AG04449 (cell line): ENCODE measurements at regions of chr3 and their contacts with region 1.

Region 1: DNA sequence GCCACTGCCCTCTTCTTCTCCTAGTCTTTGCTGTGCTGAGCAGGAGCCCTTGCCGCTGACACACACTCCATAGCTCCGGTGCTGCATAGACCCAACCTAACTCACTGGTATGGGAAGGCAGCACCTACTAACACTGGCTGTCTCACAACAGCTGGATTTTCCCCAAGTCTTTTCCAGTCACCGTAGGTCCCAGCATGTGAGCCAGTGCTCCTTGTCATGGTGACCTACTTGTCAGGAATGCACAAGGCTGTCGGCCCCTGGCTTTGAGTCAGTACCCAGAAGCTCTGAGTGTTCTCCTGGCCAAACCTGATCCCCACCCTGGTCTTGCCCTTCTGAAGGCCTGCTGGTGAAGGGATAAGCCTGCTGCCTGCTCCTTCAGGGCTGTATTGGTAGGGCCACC is 25.7 kb downstream of the AMOTL2 start:
- DNase-seq: no peak
- H3K4me3 ChIP-seq: no peak overlapping the region
- CTCF ChIP-seq: no peak

Region 2: DNA sequence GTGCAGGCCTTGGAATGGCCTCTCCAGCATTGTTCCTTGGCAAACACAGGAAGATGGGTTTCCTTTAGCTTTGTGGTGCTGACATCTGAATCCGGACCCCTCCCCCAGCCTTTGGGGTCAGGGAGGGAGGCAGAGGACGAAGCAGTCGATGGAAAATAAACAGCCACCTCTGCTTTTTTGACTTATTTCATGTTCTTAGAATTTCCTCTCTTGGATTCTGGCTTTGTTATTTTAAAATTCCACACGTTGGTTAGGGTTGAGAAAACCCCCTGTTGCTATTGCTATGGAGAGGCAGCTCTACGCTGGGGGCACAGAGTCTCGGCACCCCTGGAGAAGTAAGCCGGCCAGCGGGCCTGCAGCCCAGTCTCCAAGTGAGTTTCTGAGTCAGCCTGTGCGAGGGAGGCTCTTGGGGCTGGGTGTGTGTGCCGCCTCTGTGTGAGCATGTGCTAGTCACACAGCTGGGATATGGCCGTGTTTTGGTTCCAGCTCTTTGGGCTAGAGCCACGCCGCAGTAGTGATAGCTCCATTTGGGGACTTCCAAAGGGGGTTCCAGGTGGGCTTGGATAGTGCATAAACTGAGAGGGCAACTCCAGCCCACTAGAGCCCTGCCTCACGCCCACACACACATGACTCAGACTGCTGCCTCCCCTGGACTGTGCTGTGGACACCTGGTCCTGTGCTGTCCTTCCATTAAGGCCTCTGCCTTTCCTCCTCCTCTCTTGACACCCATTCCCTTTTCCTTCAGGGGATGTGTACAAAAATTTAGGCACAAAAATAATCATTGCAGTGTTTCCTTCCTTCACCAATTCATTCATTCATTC is 33.0 kb before region 1 on chr3:
- CTCF ChIA-PET with region 1: no interaction called
- POLR2A ChIA-PET with region 1: interaction called, 12 read pairs
- DNase-seq: no peak
- H3K4me3 ChIP-seq: no peak overlapping the region
- CTCF ChIP-seq: no peak

Region 3: DNA sequence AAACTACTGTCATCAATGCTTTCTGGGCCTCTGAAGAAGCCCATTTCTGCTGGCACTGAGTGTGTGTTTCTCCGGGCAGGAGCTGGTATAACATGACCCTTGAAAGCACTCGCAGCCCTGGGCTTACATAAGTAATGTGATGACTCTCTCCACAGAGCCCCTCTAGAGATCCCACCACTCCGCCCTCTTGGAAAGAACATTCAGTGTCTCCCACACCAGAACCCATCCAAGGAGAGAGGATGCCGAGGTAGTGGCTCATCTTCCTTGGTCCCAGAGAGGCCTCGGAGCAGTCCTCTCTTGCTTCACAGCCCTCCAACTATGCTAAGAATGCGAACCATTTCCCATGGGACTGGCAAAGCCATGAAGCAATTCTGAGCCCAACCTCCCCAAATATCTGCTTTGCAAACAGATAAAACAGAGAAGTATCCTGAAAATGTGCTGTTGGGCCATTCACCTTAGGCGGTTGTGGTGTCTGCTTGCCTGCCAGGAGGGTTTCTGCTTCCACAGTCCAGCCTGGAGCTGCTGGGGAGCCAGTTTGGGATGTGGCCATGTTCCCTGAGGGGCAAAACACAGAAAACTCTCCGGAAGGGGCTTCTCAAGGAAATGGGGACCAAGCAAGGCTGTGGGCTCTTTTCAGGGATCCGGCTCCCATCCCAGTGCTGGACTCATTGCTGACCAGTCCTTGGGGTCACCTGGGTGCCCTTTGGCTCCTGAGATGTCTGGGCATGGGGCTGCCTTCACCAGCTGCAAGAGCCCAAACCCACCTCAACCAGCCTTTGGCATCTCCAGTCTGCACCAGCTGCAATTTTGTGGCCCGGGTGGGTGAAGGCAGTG is 21.5 kb before region 1 on chr3:
- CTCF ChIA-PET with region 1: interaction called, 5 read pairs
- POLR2A ChIA-PET with region 1: interaction called, 12 read pairs
- DNase-seq: peak; percentile 99
- H3K4me3 ChIP-seq: peak overlapping the region; percentile 2; the same call in 1 of the 2 replicates
- CTCF ChIP-seq: no peak

Region 4: DNA sequence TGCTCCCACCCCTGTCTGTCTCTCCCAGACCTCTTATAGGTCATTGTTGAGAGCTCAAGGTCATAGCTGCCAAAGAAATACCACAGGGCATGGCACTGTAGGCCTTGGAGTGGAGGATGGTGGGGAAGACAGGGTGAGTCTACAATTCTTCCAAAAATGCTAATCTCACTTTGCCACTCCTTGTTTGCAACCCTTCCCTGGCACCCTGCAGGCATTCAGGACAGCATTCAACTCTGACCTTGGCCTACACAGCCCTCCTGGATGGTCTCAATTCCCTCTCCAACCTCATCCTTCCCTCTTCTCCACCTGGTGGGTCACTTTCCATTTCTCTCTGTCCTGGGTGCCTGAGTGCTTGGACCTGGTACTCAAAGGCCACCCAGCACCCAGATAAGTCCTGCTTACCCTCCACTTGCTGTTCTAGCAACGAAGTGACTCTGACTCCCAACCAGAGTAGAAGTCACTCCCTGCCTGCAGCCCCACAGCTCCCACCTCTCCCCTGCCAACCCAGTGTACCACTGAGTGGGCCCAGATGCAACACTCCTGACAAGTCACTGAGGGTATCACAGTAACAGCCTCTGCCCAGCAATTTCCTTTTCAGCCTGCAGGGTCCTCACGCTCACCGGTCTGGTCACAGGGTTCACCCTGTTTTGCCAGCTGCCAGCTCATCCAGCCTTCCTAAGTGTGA is 10.9 kb before region 1 on chr3:
- CTCF ChIA-PET with region 1: interaction called, 3 read pairs
- POLR2A ChIA-PET with region 1: interaction called, 26 read pairs
- DNase-seq: no peak
- H3K4me3 ChIP-seq: no peak overlapping the region
- CTCF ChIP-seq: no peak